Activated CD4-positive, alpha-beta memory T cell treated with anti-CD3 and anti-CD28 coated beads for 36 hours (primary cell): ENCODE measurements at regions of chr7 and their contacts with region 1.

Region 1: DNA sequence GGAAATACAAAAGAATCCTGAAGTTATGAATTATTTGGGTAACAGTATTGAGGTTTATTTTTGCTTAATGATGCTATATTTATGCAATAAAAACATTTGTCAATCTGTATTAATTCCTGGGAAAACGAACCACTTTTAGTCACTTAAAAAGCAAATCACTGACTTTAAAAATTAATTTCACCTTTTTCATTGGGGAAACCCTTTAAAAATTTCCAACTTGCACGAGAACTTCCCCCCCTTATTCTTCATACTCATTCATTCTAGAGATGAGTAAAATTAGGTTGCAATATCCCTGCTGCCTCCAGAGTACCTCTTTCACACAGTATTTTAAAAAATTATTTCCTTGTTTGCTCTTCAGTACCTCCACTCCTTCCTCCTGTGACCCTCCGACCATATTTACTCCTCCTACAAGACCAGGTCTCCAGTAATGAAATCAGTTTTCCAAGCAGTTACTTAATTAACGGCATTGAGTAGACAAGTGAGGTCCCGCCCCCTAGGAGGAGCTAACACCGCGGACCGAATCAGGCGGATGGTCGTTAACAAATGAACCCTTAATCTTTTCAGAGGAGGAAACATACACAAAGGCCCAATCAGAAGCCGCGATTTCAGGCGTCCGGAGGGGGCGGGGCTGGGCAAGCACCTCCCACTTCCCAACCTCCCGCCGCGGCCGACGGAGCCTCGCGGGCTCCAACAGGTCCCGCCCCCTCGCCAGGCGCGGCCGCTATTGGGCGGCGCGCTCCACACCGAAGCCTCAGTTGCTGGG is 465 bp upstream of the TRIM24 start:
- DNase-seq: peak; percentile 98
- H3K4me3 Mint-ChIP-seq: peak overlapping the region; percentile 90
- H3K27ac Mint-ChIP-seq: peak overlapping the region; percentile 65
- H3K4me1 Mint-ChIP-seq: peaks cover 25% of the 10 kb centered on the region
- H3K27me3 Mint-ChIP-seq: no peaks in the 10 kb centered on the region

Region 2: GRCh38 chr7:138161600-138162081 is 298.0 kb before region 1 on chr7:
- CTCF ChIA-PET with region 1: no interaction called
- POLR2A ChIA-PET with region 1: no interaction called
- intact Hi-C with region 1: loop called (anchors 10 kb)
- DNase-seq: peak; percentile 82
- H3K4me3 Mint-ChIP-seq: no peak overlapping the region
- H3K27ac Mint-ChIP-seq: no peak overlapping the region
- H3K4me1 Mint-ChIP-seq: no peaks in the 10 kb centered on the region
- H3K27me3 Mint-ChIP-seq: no peaks in the 10 kb centered on the region

Region 3: DNA sequence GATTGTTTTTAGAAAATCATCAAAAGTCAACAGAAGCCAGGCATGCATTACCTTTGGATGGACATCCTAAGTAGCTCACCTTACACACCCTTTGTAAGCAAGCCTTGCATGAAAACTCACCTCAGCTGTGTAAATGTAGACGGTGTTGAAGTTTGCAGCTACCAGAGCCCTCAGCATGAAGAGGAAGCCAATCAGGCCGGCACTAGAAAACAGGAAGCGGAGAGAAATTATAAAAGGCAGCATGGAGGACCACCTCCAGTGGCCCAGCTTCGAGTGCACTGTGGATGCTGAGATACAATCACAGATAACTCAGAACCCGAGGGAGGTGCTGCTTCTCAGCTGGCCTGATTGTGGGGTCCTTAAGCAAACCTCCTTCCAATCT is 166.2 kb after region 1 on chr7:
- CTCF ChIA-PET with region 1: no interaction called
- POLR2A ChIA-PET with region 1: no interaction called
- intact Hi-C with region 1: loop called (anchors 5 kb)
- DNase-seq: no peak
- H3K4me3 Mint-ChIP-seq: no peak overlapping the region
- H3K27ac Mint-ChIP-seq: no peak overlapping the region
- H3K4me1 Mint-ChIP-seq: peaks cover 24% of the 10 kb centered on the region
- H3K27me3 Mint-ChIP-seq: no peaks in the 10 kb centered on the region

Region 4: GRCh38 chr7:138875794-138876193 is 416.2 kb after region 1 on chr7:
- CTCF ChIA-PET with region 1: no interaction called
- POLR2A ChIA-PET with region 1: no interaction called
- intact Hi-C with region 1: loop called (anchors 5 kb)
- DNase-seq: peak; percentile 80
- H3K4me3 Mint-ChIP-seq: peak overlapping the region; percentile 29
- H3K27ac Mint-ChIP-seq: peak overlapping the region; percentile 85
- H3K4me1 Mint-ChIP-seq: peaks cover 25% of the 10 kb centered on the region
- H3K27me3 Mint-ChIP-seq: no peaks in the 10 kb centered on the region

Region 5: GRCh38 chr7:139340037-139340807 is 880.6 kb after region 1 on chr7:
- CTCF ChIA-PET with region 1: no interaction called
- POLR2A ChIA-PET with region 1: no interaction called
- intact Hi-C with region 1: loop called (anchors 5 kb)
- DNase-seq: peak; percentile 99
- H3K4me3 Mint-ChIP-seq: peak overlapping the region; percentile 86
- H3K27ac Mint-ChIP-seq: peak overlapping the region; percentile 99
- H3K4me1 Mint-ChIP-seq: peaks cover 27% of the 10 kb centered on the region
- H3K27me3 Mint-ChIP-seq: peaks cover 4% of the 10 kb centered on the region